Aorta (tissue), 5 donors: ENCODE measurements at regions of chrX and their contacts with region 1.

Region 1: DNA sequence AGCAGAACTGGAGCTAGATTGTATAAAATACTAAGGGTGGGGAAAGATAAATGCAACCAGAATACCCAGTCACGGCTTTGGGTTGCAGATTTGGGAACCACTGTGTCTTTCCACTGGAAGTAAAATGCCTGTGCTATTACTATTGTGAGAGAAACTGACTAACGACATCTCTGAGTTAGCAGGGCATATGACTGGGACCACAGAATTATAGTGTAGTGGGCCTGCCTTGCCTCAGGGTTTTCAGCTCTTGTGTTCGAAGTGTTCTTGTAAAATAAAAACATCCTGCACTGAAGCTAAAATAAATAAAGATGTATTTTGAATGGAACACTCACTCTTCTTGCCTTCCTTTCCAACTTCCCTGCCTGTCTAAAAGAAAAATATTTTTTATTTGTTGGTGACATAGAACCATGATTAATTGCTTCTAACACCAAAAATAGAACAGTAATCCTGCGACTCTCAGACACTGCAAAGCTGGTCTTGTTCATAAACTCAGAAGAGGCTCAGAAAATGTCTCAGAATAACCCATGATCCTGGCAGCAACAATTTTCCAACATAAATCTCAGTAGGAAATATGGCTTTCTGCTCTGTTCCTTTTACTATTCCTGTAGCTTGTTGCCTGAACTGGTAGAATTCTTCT is 104.2 kb downstream of the FAM47B start:
- DNase-seq: no peak
- ATAC-seq: peak; percentile 81
- H3K4me3 ChIP-seq: no peak overlapping the region
- H3K27ac ChIP-seq: peak overlapping the region in 1 of 2 donors; percentile 43
- H3K4me1 ChIP-seq: peaks cover 0 to 2% of the 10 kb centered on the region in 2 donors
- H3K27me3 ChIP-seq: no peaks in the 10 kb centered on the region

Region 2: DNA sequence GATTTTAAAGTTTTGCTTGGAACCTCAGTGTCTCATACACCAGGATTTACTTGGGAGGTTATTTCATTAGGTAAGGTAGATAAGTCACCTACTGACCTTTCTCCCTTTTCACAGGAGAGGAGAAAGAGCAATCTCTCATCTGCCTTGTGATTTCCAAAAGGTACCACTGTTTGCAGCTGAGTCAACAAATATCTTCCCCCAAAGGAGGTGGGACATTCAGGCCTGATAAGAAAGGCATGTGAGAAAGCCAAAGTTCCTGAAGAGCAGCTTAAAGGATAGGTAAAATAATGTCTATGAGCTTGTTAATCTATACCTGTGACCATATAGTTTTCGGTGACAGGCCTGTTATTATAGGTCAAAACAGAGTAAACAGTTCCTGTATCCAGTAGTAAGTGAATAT is 59.1 kb before region 1 on chrX:
- intact Hi-C with region 1: loop called in 1 of 2 experiments (anchors 2 kb)
- DNase-seq: no peak
- ATAC-seq: no peak
- H3K4me3 ChIP-seq: no peak overlapping the region
- H3K27ac ChIP-seq: no peak overlapping the region
- H3K4me1 ChIP-seq: no peaks in the 10 kb centered on the region
- H3K27me3 ChIP-seq: no peaks in the 10 kb centered on the region